ENCODE measurements at regions of chr10 and their contacts with region 1.

Region 1: GRCh38 chr10:91251430-91252056 is 31.1 kb downstream of the PCGF5 start:
- DNase-seq: peak; percentile 30
- ATAC-seq: peak; percentile 83
- H3K4me3 ChIP-seq: no peak overlapping the region
- H3K27ac ChIP-seq: no peak overlapping the region
- H3K4me1 ChIP-seq: no peaks in the 10 kb centered on the region
- H3K27me3 ChIP-seq: no peaks in the 10 kb centered on the region
- CTCF ChIP-seq: peak; percentile 77 to 90 (median 81); a peak in 5 of 6 replicates
- EP300 ChIP-seq: no peak
- POLR2A ChIP-seq: no peak
- RAD21 ChIP-seq: peak; percentile 99

Region 2: GRCh38 chr10:90871766-90872647 is 379.5 kb before region 1 on chr10 and contains the start of gene RPP30:
- CTCF ChIA-PET with region 1: interaction called, 10 read pairs
- POLR2A ChIA-PET with region 1: no interaction called
- RAD21 ChIA-PET with region 1: interaction called, 6 read pairs
- SMC1A ChIA-PET with region 1: interaction called, 30 read pairs
- in situ Hi-C with region 1: no loop called
- intact Hi-C with region 1: no loop called
- DNase-seq: peak; percentile 46
- ATAC-seq: peak; percentile 99
- H3K4me3 ChIP-seq: peak within 1 kb of the TSS; percentile 87
- H3K27ac ChIP-seq: peak within 1 kb of the TSS; percentile 66
- H3K4me1 ChIP-seq: 0 out of 2 replicates have a peak, but pooled peaks cover 3% of the 10 kb centered on the region
- H3K27me3 ChIP-seq: no peaks in the 10 kb centered on the region; a peak in 1 of 4 replicates
- CTCF ChIP-seq: no peak
- EP300 ChIP-seq: no peak
- POLR2A ChIP-seq: peak; percentile 84
- RAD21 ChIP-seq: no peak
- polyA plus RNA-seq, gene RPP30: 178 to 208 TPM

Region 3: DNA sequence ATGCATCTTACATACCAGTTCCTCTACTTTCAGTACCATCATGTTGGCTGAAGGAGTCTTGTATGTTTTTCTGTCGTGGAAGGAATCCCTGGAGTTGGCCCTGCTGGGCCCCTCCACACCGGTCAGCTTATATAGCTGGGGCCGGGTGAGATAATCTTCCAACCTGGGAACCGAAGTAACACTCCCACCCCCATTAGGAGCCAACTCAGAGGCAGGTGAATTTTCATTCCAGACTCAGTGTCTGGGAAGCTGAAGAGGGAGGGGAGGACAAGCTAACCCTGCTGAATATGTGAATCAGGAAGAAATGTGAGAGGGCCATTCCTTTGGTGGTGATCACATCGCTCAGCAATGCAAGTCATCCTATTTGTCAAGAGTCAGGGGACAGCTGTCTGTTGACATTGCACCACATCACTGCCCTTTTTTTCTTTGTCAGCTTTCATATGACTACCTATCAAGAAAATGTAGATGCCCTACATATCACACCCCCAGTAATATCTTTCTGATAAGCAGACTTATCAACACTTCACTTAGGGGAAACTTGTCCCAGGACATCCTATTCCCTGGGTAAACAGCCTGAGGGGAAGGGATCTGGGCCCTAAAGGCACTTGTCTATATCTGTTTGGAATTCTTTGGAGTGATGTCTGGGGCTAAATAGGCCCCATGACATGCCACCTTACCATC is 330.4 kb before region 1 on chr10 and contains the start of gene ANKRD1:
- CTCF ChIA-PET with region 1: interaction called, 253 read pairs
- POLR2A ChIA-PET with region 1: no interaction called
- RAD21 ChIA-PET with region 1: interaction called, 36 read pairs
- SMC1A ChIA-PET with region 1: interaction called, 21 read pairs
- in situ Hi-C with region 1: no loop called
- intact Hi-C with region 1: no loop called
- DNase-seq: no peak
- ATAC-seq: no peak
- H3K4me3 ChIP-seq: no peak within 1 kb of the TSS
- H3K27ac ChIP-seq: no peak within 1 kb of the TSS
- H3K4me1 ChIP-seq: no peaks in the 10 kb centered on the region
- H3K27me3 ChIP-seq: no peaks in the 10 kb centered on the region
- CTCF ChIP-seq: no peak
- EP300 ChIP-seq: no peak
- POLR2A ChIP-seq: no peak
- RAD21 ChIP-seq: no peak
- polyA plus RNA-seq, gene ANKRD1: not detected

Region 4: DNA sequence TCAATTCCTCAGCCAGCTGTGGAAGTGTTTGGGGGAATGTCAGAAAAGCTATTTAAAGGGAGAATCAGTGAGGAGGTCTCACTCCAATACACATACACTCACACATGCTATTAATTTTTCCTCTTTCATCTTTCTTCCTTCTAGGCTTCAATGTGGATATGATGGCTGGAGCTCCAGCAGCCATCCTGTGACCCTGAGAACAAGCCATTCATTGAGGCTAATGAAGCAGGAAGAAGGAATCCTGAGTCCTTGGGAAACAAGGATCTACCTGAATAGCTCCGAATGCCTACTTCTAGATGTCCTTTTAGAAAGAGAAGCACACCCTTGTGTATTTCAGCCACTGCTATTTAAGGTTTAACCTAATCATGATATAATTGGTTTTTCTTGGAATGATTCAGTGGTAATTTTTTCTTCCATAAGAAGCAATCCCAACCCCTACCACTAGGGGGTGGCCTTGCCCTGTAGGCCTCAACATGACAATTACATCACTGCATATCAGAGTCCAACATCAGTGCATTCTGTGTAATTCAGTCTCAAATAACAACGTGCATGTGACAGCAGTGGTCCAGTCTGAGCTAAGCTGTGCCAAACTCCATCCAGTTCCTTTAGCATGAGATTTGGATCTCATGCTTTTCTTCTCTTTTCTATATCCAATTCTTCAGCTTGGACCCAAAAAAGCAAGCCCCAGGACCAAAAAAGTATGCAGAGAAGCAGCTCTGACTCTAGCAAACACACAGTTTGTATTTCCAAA is 245.4 kb before region 1 on chr10:
- CTCF ChIA-PET with region 1: interaction called, 289 read pairs
- POLR2A ChIA-PET with region 1: interaction called, 14 read pairs
- RAD21 ChIA-PET with region 1: interaction called, 203 read pairs
- SMC1A ChIA-PET with region 1: interaction called, 296 read pairs
- in situ Hi-C with region 1: loop called (anchors 10 kb)
- intact Hi-C with region 1: loop called (anchors 1 kb)
- DNase-seq: peak; percentile 80
- ATAC-seq: peak; percentile 80
- H3K4me3 ChIP-seq: peak overlapping the region; percentile 29; the same call in 1 of the 2 replicates
- H3K27ac ChIP-seq: peak overlapping the region; percentile 71
- H3K4me1 ChIP-seq: peaks cover 46% of the 10 kb centered on the region
- H3K27me3 ChIP-seq: no peaks in the 10 kb centered on the region
- CTCF ChIP-seq: peak; percentile 89 to 97 (median 93)
- EP300 ChIP-seq: 0 out of 4 replicates have a peak, but pooled peaks of 1 of the 2 experiments have one; percentile 20
- POLR2A ChIP-seq: no peak
- RAD21 ChIP-seq: peak; percentile 96

Region 5: DNA sequence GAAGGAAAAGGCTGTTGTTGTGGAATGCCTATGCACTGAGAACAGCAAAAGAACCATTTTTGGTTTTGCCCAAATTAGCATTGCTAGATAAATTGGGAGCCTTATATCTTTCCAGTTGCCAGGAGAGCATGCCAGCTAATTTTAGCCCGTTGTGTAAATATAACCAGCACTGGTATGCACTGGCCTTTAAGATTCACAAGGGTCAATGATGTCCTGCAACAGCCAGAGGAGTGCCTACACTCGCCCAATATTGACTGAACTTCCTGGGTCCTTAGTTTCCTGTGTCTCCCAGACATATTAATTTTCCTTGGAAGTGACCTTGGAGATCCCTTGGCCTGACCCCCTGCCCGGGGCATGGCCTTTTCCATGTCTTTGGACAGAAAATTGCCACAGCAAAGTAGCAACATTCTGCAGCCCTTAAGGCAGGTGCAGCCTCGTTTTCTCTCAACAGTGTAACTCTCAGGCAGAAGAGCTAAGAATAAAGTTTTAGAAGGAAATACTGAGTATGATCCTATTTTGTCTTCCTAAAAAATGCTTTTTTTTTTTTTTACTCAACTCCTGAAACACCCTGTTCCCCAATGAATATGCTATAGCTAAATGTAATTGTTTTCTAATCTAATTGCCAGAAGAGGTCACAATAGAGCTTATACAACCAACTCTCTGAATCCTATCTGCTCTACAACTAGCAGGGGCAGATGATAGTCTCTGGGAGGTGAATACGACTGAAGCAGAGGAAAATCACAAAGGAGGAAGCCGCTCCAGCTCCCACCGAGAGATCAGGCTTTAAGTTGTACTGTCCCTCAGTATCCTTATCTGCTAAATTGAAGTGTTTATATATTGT is 163.0 kb before region 1 on chr10:
- CTCF ChIA-PET with region 1: interaction called, 149 read pairs
- POLR2A ChIA-PET with region 1: interaction called, 4 read pairs
- RAD21 ChIA-PET with region 1: interaction called, 110 read pairs
- SMC1A ChIA-PET with region 1: interaction called, 119 read pairs
- in situ Hi-C with region 1: no loop called
- intact Hi-C with region 1: loop called (anchors 2 kb)
- DNase-seq: no peak
- ATAC-seq: peak; percentile 64
- H3K4me3 ChIP-seq: no peak overlapping the region
- H3K27ac ChIP-seq: no peak overlapping the region
- H3K4me1 ChIP-seq: no peaks in the 10 kb centered on the region
- H3K27me3 ChIP-seq: no peaks in the 10 kb centered on the region
- CTCF ChIP-seq: peak in 2 of 3 experiments; percentile 25 to 37; a peak in 3 of 6 replicates
- EP300 ChIP-seq: no peak
- POLR2A ChIP-seq: no peak
- RAD21 ChIP-seq: peak; percentile 75

Region 6: DNA sequence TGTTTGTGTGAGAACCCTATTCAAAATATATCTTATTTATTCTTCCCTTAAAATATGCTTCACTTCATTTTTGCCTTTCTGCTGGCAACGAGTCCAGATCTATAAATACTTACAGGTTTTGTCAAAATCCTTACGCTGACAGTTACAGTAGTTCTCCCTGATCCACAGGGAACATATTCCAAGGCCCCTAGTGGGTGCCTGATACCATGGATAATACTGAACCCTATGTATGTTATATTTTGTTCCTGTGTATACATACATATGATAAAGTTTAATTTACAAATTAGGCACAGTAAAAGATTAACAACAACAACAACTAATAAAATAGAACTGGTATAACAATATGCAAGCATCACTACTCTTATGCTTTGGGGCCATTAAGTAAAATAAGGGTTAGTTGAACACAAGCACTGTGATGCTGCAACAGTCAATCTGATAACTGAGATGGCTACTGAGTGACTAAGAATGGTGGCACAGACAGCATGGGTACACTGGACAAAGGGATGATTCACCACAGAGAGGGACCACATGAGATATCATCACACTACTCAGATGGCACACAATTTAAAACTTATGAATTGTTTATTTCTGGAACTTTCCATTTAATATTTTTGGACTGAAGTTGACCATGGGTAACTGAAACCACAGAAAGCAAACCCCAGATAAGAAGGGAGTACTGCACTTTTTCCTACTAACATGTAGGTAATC is 60.5 kb before region 1 on chr10:
- CTCF ChIA-PET with region 1: interaction called, 8 read pairs
- POLR2A ChIA-PET with region 1: no interaction called
- RAD21 ChIA-PET with region 1: interaction called, 6 read pairs
- SMC1A ChIA-PET with region 1: interaction called, 28 read pairs
- in situ Hi-C with region 1: no loop called
- intact Hi-C with region 1: no loop called
- DNase-seq: no peak
- ATAC-seq: peak; percentile 93
- H3K4me3 ChIP-seq: no peak overlapping the region
- H3K27ac ChIP-seq: peak overlapping the region; percentile 43
- H3K4me1 ChIP-seq: peaks cover 21% of the 10 kb centered on the region; the same call in 1 of the 2 replicates
- H3K27me3 ChIP-seq: no peaks in the 10 kb centered on the region
- CTCF ChIP-seq: no peak
- EP300 ChIP-seq: no peak; a peak in 1 of 4 replicates
- POLR2A ChIP-seq: no peak
- RAD21 ChIP-seq: no peak

Region 7: DNA sequence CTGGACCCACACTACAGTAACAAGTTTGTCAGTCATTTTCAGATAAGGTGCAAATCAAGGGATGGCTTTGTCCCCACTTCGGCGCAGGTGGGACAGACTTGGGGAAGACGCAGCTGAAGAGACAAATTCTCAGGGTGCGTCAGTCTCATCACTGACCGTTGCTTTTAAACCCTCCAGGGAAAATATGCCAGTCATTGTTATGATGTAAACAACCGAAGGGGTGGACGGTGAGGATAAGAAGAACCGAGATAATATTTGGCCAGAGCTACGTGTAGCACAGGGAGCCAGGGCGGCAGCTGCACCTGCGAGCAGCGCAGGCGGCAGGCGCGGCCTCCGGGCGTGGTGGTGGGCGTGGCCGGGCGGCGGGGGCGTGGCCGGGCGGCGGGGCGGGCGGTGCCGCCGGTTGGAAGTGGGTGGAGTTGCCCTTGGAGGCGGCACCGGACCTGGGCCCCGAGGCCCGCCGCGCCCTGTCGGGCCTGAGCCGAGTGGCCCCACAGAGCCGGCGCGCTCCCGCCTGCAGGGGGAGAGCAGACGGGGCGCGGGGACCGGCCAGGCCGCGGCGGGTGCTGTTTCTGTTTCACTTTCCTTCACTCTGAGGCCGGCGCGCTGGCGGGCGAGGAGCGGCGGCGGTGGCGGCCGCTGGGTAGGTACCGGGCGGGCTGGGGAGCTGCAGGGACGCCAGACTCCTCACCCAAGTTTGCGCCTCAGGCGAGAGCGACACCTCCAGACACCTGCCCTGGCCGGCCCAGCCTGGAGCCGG is 31.2 kb before region 1 on chr10 and contains the start of gene PCGF5:
- CTCF ChIA-PET with region 1: interaction called, 7 read pairs
- POLR2A ChIA-PET with region 1: no interaction called
- RAD21 ChIA-PET with region 1: interaction called, 27 read pairs
- SMC1A ChIA-PET with region 1: interaction called, 13 read pairs
- in situ Hi-C with region 1: no loop called
- intact Hi-C with region 1: no loop called
- DNase-seq: no peak
- ATAC-seq: peak; percentile 99
- H3K4me3 ChIP-seq: peak within 1 kb of the TSS; percentile 99
- H3K27ac ChIP-seq: peak within 1 kb of the TSS; percentile 84
- H3K4me1 ChIP-seq: peaks cover 10% of the 10 kb centered on the region; the same call in 1 of the 2 replicates
- H3K27me3 ChIP-seq: no peaks in the 10 kb centered on the region
- CTCF ChIP-seq: peak in 2 of 3 experiments; percentile 24 to 39; a peak in 3 of 6 replicates
- EP300 ChIP-seq: no peak
- POLR2A ChIP-seq: peak; percentile 82
- RAD21 ChIP-seq: no peak
- polyA plus RNA-seq, gene PCGF5: 33.2 to 35.0 TPM

Region 8: GRCh38 chr10:91672021-91672608 is 420.6 kb after region 1 on chr10:
- CTCF ChIA-PET with region 1: no interaction called
- POLR2A ChIA-PET with region 1: no interaction called
- RAD21 ChIA-PET with region 1: no interaction called
- SMC1A ChIA-PET with region 1: no interaction called
- in situ Hi-C with region 1: no loop called
- intact Hi-C with region 1: no loop called
- DNase-seq: no peak
- ATAC-seq: no peak
- H3K4me3 ChIP-seq: no peak overlapping the region
- H3K27ac ChIP-seq: no peak overlapping the region
- H3K4me1 ChIP-seq: no peaks in the 10 kb centered on the region
- H3K27me3 ChIP-seq: no peaks in the 10 kb centered on the region
- CTCF ChIP-seq: no peak
- EP300 ChIP-seq: no peak
- POLR2A ChIP-seq: no peak
- RAD21 ChIP-seq: no peak